Posterior cingulate gyrus (tissue), 11 donors: ENCODE measurements at regions of chr1 and their contacts with region 1.

Region 1: DNA sequence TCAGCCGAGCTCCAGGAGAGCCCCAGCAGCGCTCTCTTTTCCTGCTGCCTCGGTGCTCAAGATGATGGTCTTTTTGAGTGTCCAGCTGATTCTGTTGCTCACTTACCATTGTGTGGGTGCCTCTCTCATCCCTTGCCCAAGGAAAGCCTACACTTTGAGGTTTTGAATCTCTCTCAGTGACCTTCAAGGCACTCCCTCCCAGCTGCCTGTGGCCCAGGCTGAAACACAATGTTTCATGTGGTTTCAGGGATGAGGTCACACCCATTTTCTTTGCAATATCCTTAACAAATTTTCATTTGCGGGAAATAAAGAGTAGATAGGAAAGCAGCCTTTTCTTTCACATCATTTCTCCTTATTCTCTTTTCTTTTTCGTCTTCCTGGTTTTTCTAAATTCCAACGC is 12.6 kb upstream of the MRPS14 start:
- DNase-seq: no peak

Region 2: GRCh38 chr1:175319418-175320230 is 283.8 kb after region 1 on chr1:
- intact Hi-C with region 1: loop called (anchors 10 kb)
- DNase-seq: peak; percentile 32 to 93 (median 66)